HCT116 (cell line): ENCODE measurements at regions of chr11 and their contacts with region 1.

Region 1: DNA sequence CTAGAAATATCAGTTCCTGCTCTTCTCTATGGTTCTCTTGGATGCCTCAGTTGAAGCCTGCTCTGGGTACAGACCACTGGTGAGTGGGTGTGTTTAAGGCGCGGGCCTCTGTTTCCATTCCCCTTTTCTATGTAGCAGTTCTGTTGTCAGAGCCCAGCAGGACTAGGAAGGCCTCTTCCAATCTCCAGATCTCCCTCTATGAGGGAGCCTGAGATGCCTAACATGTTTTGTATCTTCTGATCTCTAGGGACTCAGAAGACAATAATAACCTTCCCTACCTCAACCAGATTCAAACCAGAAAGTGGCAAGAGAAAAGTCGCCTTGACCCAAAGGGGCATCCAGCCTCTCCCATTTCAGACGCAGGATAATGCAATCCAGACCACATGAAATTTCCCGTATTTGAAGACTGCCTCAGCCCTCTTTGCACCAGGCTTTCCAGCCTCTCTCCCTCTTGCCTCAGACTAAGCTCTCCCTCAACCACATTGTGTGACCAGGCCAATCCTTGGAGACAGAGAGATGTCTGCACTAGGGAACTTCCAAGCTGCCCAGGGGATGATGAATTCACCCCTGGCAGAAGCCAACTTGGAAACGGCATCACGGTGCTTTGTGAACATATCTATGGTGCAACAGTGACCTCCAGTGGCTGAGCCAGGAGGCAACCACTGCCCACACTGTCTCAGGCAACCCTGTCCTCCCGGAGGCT is 150.1 kb upstream of the UBASH3B start:
- DNase-seq: peak; percentile 58
- ATAC-seq: peak; percentile 99
- H3K4me3 ChIP-seq: no peak overlapping the region
- H3K27ac ChIP-seq: no peak overlapping the region
- H3K4me1 ChIP-seq: peaks cover 0 to 3% of the 10 kb centered on the region in 2 experiments; a peak in 3 of 4 replicates
- H3K27me3 ChIP-seq: no peaks in the 10 kb centered on the region
- CTCF ChIP-seq: peak; percentile 80 to 91 (median 91); a peak in 5 of 6 replicates
- POLR2A ChIP-seq: no peak
- RAD21 ChIP-seq: peak; percentile 98

Region 2: DNA sequence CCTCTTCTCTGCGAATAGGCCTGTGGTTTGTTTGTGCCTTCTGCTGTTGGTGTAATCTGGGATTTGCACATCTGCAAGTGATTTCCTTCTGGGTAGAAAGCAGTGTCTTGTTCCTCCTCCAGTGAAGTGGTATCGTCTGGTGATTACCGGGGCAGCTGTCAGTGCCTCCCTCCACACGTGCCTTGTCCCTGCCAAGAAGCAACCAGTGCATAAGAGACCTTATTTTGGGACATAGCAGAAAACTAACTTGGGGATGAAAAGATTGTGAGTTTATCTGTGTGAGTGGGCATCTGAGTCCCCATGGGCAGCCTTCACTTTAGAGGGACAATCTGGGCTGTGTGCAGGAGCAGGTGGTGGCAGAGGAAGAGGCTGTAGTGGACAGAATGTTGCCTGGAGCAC is 981.2 kb before region 1 on chr11:
- CTCF ChIA-PET with region 1: no interaction called
- POLR2A ChIA-PET with region 1: no interaction called
- RAD21 ChIA-PET with region 1: no interaction called
- intact Hi-C with region 1: no loop called
- DNase-seq: no peak
- ATAC-seq: no peak
- H3K4me3 ChIP-seq: no peak overlapping the region
- H3K27ac ChIP-seq: no peak overlapping the region
- H3K4me1 ChIP-seq: no peaks in the 10 kb centered on the region
- H3K27me3 ChIP-seq: no peaks in the 10 kb centered on the region
- CTCF ChIP-seq: no peak
- POLR2A ChIP-seq: no peak
- RAD21 ChIP-seq: no peak

Region 3: GRCh38 chr11:122215244-122215992 is 290.0 kb before region 1 on chr11:
- CTCF ChIA-PET with region 1: interaction called, 47 read pairs
- POLR2A ChIA-PET with region 1: no interaction called
- RAD21 ChIA-PET with region 1: interaction called, 3 read pairs
- intact Hi-C with region 1: loop called (anchors 1 kb)
- DNase-seq: peak; percentile 51
- ATAC-seq: peak; percentile 98
- H3K4me3 ChIP-seq: no peak overlapping the region
- H3K27ac ChIP-seq: 0 out of 2 replicates have a peak overlapping the region, but pooled peaks have one; percentile 0
- H3K4me1 ChIP-seq: peaks cover 13 to 18% of the 10 kb centered on the region in 2 experiments; a peak in 3 of 4 replicates
- H3K27me3 ChIP-seq: no peaks in the 10 kb centered on the region
- CTCF ChIP-seq: peak; percentile 71 to 94 (median 91); a peak in 5 of 6 replicates
- POLR2A ChIP-seq: no peak
- RAD21 ChIP-seq: peak; percentile 81

Region 4: DNA sequence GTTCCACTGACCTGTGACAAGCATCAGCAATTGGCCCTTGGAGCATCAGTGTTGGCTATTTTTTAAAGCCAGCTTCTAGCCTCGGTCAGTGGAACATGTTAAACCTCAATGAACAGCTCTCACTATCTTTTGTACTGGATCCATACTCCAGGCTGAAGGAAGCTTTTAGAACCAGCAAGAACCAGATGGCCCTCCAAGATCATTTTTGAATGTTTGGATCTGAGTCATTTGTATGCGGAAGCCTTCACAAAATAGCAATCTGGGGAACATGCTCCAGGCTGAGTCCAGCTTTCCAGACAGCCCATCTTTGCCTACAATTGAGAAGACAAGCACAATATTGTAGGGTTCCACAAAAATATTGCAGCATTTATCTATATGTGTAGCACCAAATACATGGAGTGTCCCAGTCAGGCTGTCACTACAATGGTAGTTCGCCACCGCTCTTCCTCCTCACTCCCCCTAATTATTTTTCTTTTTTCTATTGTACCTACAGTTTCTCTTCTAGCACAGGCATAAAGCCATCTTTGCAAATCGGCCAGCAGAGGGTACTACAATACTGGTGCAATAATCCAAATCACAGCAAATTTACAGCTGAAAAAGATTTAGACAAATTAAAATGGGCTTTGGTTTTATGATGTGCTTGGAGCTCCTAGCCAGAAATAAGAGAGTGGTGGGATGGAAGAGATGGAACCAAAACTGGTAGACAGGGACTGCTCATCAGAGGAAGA is 212.0 kb before region 1 on chr11:
- CTCF ChIA-PET with region 1: interaction called, 6 read pairs
- POLR2A ChIA-PET with region 1: no interaction called
- RAD21 ChIA-PET with region 1: interaction called in 1 of 2 experiments, 3 read pairs
- intact Hi-C with region 1: loop called (anchors 2 kb)
- DNase-seq: no peak
- ATAC-seq: no peak
- H3K4me3 ChIP-seq: no peak overlapping the region
- H3K27ac ChIP-seq: no peak overlapping the region
- H3K4me1 ChIP-seq: no peaks in the 10 kb centered on the region
- H3K27me3 ChIP-seq: no peaks in the 10 kb centered on the region
- CTCF ChIP-seq: peak; percentile 5 to 26 (median 9); a peak in 3 of 6 replicates
- POLR2A ChIP-seq: no peak
- RAD21 ChIP-seq: peak; percentile 41